ENCODE measurements at regions of chr9 and their contacts with region 1.

Region 1: GRCh38 chr9:29691758-29692407 is 2118.6 kb upstream of the C9orf72 start:
- H3K4me3 ChIP-seq: no peak overlapping the region
- H3K27ac ChIP-seq: no peak overlapping the region
- H3K4me1 ChIP-seq: no peaks in the 10 kb centered on the region
- CTCF ChIP-seq: no peak

Region 2: DNA sequence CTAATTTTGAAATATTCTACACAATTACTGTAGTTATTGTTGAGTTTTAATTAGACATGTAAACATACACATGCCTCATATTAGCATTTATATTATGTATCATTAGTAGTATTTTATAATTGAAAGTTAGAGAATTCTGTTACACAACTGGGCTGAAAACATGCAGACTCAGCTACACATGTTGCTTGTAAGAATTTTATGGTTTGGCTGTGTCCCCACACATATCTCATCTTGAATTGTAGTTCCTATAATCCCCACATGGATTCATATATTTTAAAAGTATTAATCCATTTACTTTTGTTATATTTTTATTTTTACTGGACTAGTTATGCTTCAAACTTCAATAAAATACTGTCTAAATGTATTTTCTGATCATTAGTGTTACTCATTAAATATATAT is 43.3 kb before region 1 on chr9:
- CTCF ChIA-PET with region 1: no interaction called
- POLR2A ChIA-PET with region 1: no interaction called
- H3K4me3 ChIP-seq: no peak overlapping the region
- H3K27ac ChIP-seq: no peak overlapping the region
- H3K4me1 ChIP-seq: no peaks in the 10 kb centered on the region
- CTCF ChIP-seq: no peak

Region 3: DNA sequence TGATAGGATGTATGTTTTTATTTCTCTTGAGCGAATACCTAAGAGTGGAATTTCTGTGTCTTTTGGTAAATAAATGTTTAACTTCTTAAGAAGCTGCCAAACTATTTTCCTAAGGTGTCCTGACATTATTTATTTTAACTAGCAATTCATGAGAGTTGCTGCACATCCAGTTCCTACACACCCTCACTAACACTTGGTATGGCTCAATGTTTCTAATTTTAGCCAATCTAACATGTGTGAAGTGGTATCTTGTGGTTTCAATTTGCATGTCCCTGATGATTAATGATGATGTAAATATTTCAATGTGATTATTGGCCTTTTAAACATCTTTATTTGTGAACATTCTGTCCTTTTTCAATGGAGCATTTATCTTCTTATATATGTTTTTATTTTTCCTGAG is 23.2 kb before region 1 on chr9:
- CTCF ChIA-PET with region 1: interaction called, 10 read pairs
- POLR2A ChIA-PET with region 1: no interaction called
- H3K4me3 ChIP-seq: no peak overlapping the region
- H3K27ac ChIP-seq: no peak overlapping the region
- H3K4me1 ChIP-seq: no peaks in the 10 kb centered on the region
- CTCF ChIP-seq: no peak

Region 4: DNA sequence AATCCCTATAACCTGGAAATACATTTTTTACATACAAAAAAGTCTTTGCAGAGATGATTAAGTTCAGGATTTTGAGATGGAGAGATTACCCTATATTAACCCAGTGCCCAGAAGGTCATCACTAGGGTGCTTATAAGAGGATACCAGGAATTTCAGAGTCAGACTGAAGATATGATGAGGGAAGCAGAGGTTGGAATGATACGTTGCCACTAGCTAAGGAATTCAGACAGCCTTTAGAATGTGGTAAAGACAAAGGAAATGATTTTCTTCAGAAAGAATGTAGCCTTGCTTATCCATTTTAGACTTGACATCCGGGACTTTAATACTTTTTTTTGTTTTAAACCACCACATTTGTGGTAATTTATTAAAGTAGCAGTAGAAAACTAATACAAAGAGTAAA is 58.2 kb after region 1 on chr9:
- CTCF ChIA-PET with region 1: no interaction called
- POLR2A ChIA-PET with region 1: no interaction called
- H3K4me3 ChIP-seq: no peak overlapping the region
- H3K27ac ChIP-seq: no peak overlapping the region
- H3K4me1 ChIP-seq: no peaks in the 10 kb centered on the region
- CTCF ChIP-seq: no peak

Measured in HEK293 (cell line).